ENCODE measurements at regions of chr19 and their contacts with region 1.

Region 1: DNA sequence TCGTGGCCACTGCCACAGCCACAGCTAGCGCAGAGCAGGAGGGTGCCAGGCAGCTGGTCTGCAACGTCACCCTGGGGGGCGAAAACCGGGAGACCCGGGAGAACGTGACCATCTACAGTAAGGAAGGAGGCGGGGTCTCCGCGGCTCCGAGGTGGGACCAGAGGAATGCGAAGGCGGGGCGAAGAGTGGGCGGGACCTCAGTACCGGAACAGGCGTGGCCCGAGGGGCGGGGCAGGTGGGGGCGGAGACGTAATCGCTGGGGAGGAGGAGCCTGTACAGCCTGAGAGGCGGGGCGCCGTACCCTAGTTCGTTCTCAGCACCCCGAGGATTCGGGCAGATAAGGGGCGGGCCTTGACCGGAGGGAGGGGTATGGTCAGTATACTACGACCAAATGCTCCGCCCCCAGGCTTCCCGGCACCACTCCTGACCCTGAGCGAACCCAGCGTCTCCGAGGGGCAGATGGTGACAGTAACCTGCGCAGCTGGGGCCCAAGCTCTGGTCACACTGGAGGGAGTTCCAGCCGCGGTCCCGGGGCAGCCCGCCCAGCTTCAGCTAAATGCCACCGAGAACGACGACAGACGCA is 2.5 kb downstream of the ICAM5 start:
- DNase-seq: peak; percentile 80
- H3K4me3 Mint-ChIP-seq: peak overlapping the region; percentile 65
- H3K27ac Mint-ChIP-seq: peak overlapping the region; percentile 56
- H3K4me1 Mint-ChIP-seq: peaks cover 73% of the 10 kb centered on the region
- H3K27me3 Mint-ChIP-seq: peaks cover 82% of the 10 kb centered on the region

Region 2: DNA sequence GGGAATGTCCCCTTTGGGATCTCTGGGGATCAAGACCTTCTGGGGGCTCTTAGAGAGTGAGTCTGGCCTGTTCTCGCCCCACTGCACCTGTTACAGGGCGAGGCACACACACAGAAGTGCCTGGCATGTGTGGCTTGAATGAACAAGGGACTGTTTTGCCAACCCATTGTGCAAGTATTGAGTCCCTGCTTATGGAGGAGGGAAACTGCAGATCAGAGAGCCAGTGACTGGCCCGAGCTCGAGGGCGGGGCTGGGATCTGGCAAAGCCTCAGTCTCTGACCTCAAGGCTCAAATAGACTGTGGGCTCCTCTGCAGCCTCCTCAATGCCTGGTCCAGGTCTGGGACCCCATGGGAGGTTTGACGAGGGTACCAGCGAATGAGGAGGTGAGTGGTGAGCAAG is 35.5 kb after region 1 on chr19:
- CTCF ChIA-PET with region 1: no interaction called
- POLR2A ChIA-PET with region 1: no interaction called
- DNase-seq: no peak
- H3K4me3 Mint-ChIP-seq: no peak overlapping the region
- H3K27ac Mint-ChIP-seq: no peak overlapping the region
- H3K4me1 Mint-ChIP-seq: peaks cover 14% of the 10 kb centered on the region
- H3K27me3 Mint-ChIP-seq: no peaks in the 10 kb centered on the region

Region 3: DNA sequence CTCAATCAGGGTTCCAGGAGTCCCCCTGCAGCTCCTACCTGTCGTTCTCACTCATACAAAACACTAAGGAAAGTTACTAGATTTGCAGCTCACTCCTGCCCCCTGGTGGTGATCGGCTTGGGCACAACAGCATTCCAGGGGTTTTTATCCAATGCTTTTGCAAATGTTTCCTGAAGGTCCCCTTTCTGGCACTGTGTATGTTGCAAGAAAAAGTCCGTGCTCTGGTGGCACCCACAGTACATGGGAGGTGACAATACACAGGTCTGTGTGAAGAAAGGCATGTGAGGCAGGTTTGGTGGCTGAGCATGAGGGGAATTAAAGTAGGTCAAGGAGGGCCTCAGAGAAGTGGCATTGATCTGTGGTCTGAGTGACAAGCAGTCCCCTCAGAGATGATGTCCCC is 96.7 kb after region 1 on chr19:
- CTCF ChIA-PET with region 1: interaction called, 10 read pairs
- POLR2A ChIA-PET with region 1: interaction called, 3 read pairs
- DNase-seq: peak; percentile 81
- H3K4me3 Mint-ChIP-seq: no peak overlapping the region
- H3K27ac Mint-ChIP-seq: peak overlapping the region; percentile 11
- H3K4me1 Mint-ChIP-seq: peaks cover 7% of the 10 kb centered on the region
- H3K27me3 Mint-ChIP-seq: no peaks in the 10 kb centered on the region